Activated CD4-positive, alpha-beta memory T cell treated with anti-CD3 and anti-CD28 coated beads for 36 hours (primary cell): ENCODE measurements at regions of chr19 and their contacts with region 1.

Region 1: GRCh38 chr19:50922317-50922853 is 11.2 kb upstream of the KLK4 start:
- DNase-seq: peak; percentile 84
- H3K4me3 Mint-ChIP-seq: no peak overlapping the region
- H3K27ac Mint-ChIP-seq: no peak overlapping the region
- H3K4me1 Mint-ChIP-seq: peaks cover 10% of the 10 kb centered on the region
- H3K27me3 Mint-ChIP-seq: peaks cover 28% of the 10 kb centered on the region

Region 2: GRCh38 chr19:50537762-50538230 is 384.6 kb before region 1 on chr19:
- CTCF ChIA-PET with region 1: interaction called, 18 read pairs
- POLR2A ChIA-PET with region 1: no interaction called
- intact Hi-C with region 1: loop called (anchors 1 kb)
- DNase-seq: peak; percentile 80
- H3K4me3 Mint-ChIP-seq: no peak overlapping the region
- H3K27ac Mint-ChIP-seq: no peak overlapping the region
- H3K4me1 Mint-ChIP-seq: peaks cover 4% of the 10 kb centered on the region
- H3K27me3 Mint-ChIP-seq: peaks cover 12% of the 10 kb centered on the region

Region 3: DNA sequence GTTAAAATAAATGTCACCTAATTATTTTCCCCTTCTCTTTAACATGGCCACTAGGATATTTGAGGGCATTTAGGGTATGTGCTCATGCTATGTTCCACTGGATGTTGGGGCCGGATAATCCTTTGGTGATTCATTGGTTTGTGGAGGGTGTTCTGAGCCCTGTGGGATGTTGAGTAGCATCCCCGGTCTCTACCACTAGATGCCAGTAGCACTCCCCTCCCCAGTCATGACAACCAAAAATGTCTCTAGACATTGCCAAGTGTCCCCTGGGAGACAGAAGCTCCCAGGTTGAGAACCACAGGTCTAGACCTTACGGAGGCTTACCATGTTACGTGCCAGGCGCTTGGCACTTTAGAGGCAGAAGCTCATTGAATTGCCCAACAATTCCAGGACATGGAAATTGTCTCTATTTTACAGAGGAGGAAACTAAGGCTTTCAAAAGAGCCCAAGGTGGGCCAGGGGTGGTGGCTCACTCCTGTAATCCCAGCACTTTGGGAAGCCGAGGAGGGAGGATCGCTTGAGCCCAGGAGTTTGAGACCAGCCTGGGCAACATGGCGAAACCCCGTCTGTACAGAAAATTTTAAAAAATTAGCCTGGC is 216.9 kb before region 1 on chr19:
- CTCF ChIA-PET with region 1: no interaction called
- POLR2A ChIA-PET with region 1: no interaction called
- intact Hi-C with region 1: loop called (anchors 5 kb)
- DNase-seq: peak; percentile 48
- H3K4me3 Mint-ChIP-seq: no peak overlapping the region
- H3K27ac Mint-ChIP-seq: no peak overlapping the region
- H3K4me1 Mint-ChIP-seq: no peaks in the 10 kb centered on the region
- H3K27me3 Mint-ChIP-seq: peaks cover 36% of the 10 kb centered on the region

Region 4: GRCh38 chr19:50784710-50785109 is 137.7 kb before region 1 on chr19:
- CTCF ChIA-PET with region 1: interaction called, 15 read pairs
- POLR2A ChIA-PET with region 1: no interaction called
- intact Hi-C with region 1: no loop called
- DNase-seq: no peak
- H3K4me3 Mint-ChIP-seq: no peak overlapping the region
- H3K27ac Mint-ChIP-seq: no peak overlapping the region
- H3K4me1 Mint-ChIP-seq: peaks cover 2% of the 10 kb centered on the region
- H3K27me3 Mint-ChIP-seq: peaks cover 17% of the 10 kb centered on the region

Region 5: GRCh38 chr19:50794439-50795237 is 127.7 kb before region 1 on chr19:
- CTCF ChIA-PET with region 1: interaction called, 19 read pairs
- POLR2A ChIA-PET with region 1: no interaction called
- intact Hi-C with region 1: no loop called
- DNase-seq: peak; percentile 60
- H3K4me3 Mint-ChIP-seq: peak overlapping the region; percentile 12
- H3K27ac Mint-ChIP-seq: peak overlapping the region; percentile 49
- H3K4me1 Mint-ChIP-seq: peaks cover 9% of the 10 kb centered on the region
- H3K27me3 Mint-ChIP-seq: no peaks in the 10 kb centered on the region

Region 6: DNA sequence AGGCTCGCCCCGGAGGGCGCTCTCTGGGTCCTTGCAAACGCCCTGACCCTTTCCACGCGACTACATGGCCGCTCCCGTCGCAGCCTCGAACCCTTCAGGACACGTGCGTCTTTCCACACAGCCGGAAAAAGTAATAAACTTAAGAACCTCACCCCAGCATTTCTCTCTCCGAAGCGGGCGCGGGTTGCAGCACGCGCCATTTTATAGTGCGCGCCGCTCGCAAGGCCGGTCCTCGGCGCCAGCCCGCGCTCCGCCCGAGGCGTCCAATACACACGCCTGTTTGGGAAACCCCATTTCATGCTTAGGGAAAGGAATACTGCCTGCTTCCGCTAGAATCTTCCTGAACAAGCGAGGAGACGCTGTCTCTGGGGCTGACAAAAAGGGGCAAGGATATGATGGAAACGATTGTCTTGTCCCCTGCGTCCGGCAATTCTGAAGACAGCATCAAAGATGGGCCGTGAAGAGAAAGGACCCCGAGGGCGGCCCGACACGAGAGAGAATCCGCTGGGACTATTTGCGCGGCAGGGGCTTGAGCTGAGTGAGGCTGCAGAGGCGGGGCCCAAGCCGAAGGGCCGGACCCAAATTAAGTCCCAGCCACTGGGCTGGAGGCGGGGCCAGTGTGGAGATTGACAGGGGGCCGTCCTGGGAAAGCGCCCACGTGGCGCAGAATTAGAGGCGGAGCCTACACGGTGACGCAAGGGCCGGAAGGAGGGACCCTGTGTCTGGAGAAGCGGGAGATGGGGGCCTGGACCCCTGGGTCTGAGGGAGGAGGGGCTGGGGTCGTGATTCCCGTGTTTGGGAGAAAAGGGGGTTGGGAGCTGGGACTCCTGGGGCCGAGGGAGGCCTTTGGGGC is 117.7 kb before region 1 on chr19:
- CTCF ChIA-PET with region 1: interaction called, 5 read pairs
- POLR2A ChIA-PET with region 1: interaction called, 3 read pairs
- intact Hi-C with region 1: loop called (anchors 10 kb)
- DNase-seq: peak; percentile 99
- H3K4me3 Mint-ChIP-seq: peak overlapping the region; percentile 96
- H3K27ac Mint-ChIP-seq: peak overlapping the region; percentile 100
- H3K4me1 Mint-ChIP-seq: peaks cover 34% of the 10 kb centered on the region
- H3K27me3 Mint-ChIP-seq: no peaks in the 10 kb centered on the region

Region 7: GRCh38 chr19:50906217-50906616 is 16.2 kb before region 1 on chr19:
- CTCF ChIA-PET with region 1: interaction called, 23 read pairs
- POLR2A ChIA-PET with region 1: no interaction called
- intact Hi-C with region 1: loop called (anchors 2 kb)
- DNase-seq: peak; percentile 53
- H3K4me3 Mint-ChIP-seq: no peak overlapping the region
- H3K27ac Mint-ChIP-seq: no peak overlapping the region
- H3K4me1 Mint-ChIP-seq: peaks cover 3% of the 10 kb centered on the region
- H3K27me3 Mint-ChIP-seq: peaks cover 44% of the 10 kb centered on the region